Astrocyte of the cerebellum (primary cell): ENCODE measurements at regions of chrX and their contacts with region 1.

Region 1: GRCh38 chrX:50469206-50469605 is 1.4 kb downstream of the DGKK start:
- DNase-seq: no peak
- H3K4me3 ChIP-seq: no peak overlapping the region
- CTCF ChIP-seq: no peak

Region 2: GRCh38 chrX:50430917-50431575 is 38.2 kb before region 1 on chrX:
- in situ Hi-C with region 1: loop called (anchors 5 kb)
- DNase-seq: no peak
- H3K4me3 ChIP-seq: no peak overlapping the region
- CTCF ChIP-seq: no peak

Region 3: GRCh38 chrX:50514811-50515210 is 45.6 kb after region 1 on chrX:
- in situ Hi-C with region 1: no loop called
- DNase-seq: no peak
- H3K4me3 ChIP-seq: no peak overlapping the region
- CTCF ChIP-seq: no peak

Region 4: GRCh38 chrX:50638123-50638522 is 168.9 kb after region 1 on chrX:
- in situ Hi-C with region 1: no loop called
- DNase-seq: no peak
- H3K4me3 ChIP-seq: no peak overlapping the region
- CTCF ChIP-seq: no peak

Region 5: DNA sequence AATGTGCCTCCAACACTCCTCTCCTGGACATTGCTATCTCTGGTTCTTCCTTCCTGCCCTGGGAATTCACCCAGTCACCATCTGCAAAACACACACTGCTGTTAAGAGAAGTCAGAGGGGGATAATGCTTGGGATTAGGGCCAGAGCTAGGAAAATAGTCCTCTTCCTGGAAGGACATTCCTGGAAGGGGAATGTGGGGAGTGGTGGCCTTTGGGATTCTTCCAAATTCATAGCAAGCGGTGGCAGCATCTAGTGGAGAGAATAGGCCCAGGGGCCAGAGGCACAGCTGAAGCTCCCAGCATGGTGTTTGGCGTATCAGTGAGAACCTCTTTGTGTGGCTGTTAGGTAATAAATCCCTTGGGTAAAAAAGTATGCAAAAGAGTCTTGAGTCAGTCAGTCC is 310.5 kb after region 1 on chrX:
- in situ Hi-C with region 1: no loop called
- DNase-seq: no peak
- H3K4me3 ChIP-seq: no peak overlapping the region
- CTCF ChIP-seq: no peak